ENCODE measurements at regions of chr11 and their contacts with region 1.

Region 1: DNA sequence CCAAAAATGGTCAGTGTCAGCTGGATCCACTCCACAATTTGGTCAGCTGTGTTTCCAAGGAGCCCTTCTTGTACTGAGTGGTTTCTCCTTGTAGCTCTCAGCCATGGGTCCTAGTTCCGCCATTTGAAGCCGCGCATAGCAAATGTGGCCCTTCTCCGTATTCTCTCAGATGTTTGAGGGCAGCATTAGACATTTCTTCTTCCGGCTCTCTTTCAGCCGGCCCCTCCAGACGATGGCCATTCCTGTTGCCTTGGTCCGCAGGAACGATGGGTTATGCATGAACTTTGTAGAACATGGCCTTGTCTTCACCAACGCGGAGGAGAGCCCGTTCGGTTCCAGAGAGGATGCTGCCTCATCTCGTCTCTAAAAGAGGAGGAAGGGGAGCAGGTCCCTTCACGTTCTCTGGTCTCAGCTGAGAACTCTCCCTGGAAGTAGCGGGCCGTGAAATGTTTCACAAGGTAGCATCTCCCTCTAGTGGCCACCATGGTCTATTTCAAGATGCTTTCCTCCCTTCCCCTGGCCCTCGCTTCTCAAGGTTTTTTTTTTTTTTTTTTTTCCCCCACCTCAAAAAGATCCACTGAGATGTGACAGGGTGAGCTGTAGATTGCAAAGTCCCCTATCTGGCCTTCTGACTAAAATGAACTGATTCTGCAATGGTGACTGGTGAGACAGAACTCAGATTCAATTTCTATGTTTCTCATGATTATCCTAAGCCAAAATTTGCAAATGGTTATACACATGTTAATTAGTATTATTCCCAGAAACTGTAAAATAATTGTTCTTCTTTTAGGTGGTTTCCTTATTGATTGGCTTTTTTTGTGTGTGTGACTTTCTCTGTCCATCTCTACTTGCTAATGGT is 19.8 kb upstream of the PLET1 start:
- DNase-seq: peak in 8 of 10 donors; percentile 37 to 93 (median 64)

Region 2: GRCh38 chr11:112113539-112114457 is 166.7 kb before region 1 on chr11:
- intact Hi-C with region 1: loop called (anchors 1 kb)
- DNase-seq: no peak

Region 3: GRCh38 chr11:112219476-112220232 is 60.8 kb before region 1 on chr11:
- intact Hi-C with region 1: loop called (anchors 1 kb)
- DNase-seq: peak in 5 of 10 donors; percentile 9 to 26 (median 17)

Region 4: GRCh38 chr11:112226062-112226830 is 54.3 kb before region 1 on chr11 and contains the start of gene PTS:
- intact Hi-C with region 1: loop called (anchors 2 kb)
- DNase-seq: peak; percentile 77 to 98 (median 85)

Region 5: GRCh38 chr11:112255067-112255720 is 25.3 kb before region 1 on chr11:
- intact Hi-C with region 1: no loop called
- DNase-seq: peak in 1 of 10 donors; percentile 19

Measured in posterior cingulate gyrus (tissue), 11 donors.